ENCODE measurements at regions of chr22 and their contacts with region 1.

Region 1: GRCh38 chr22:22748297-22748743 is 103.9 kb downstream of the GGTLC2 start:
- DNase-seq: peak; percentile 64
- ATAC-seq: peak; percentile 82
- H3K4me3 ChIP-seq: no peak overlapping the region
- H3K27ac ChIP-seq: no peak overlapping the region
- H3K4me1 ChIP-seq: no peaks in the 10 kb centered on the region
- H3K27me3 ChIP-seq: peaks cover 11% of the 10 kb centered on the region
- CTCF ChIP-seq: peak; percentile 73

Region 2: DNA sequence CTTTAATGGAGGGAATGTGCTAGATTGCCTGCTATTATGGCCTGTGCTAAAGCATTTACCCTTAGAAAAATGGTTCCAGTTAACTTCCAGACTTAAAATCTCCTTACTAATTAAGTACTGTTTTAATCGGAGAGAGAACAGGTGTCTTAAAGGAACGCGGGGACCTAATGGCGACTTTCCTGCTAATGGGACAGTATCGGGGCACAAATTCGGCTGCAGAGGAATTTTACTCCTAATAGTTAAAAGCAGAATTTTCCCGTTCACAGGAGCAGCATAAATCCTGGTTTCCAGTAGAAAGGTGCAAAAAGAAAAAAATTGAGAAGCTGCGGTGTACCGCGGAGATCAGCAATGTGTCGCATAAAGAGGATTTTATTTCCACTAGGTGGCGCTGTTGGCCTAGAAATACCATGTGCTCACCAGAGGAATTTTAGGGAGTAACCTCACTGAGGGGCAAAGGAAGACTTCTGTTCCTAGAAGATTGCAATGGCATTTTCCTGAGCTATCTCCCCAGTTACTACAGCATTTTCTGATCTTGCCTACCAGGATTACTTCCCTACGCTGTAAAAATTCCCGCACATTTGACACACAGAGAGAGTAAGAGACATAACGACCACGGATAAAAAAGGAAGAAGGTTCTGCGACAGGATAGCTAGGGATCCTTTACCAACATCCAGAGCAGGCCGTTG is 284.3 kb before region 1 on chr22:
- CTCF ChIA-PET with region 1: no interaction called
- POLR2A ChIA-PET with region 1: no interaction called
- intact Hi-C with region 1: loop called (anchors 10 kb)
- DNase-seq: peak; percentile 79
- ATAC-seq: peak; percentile 70
- H3K4me3 ChIP-seq: no peak overlapping the region
- H3K27ac ChIP-seq: no peak overlapping the region
- H3K4me1 ChIP-seq: no peaks in the 10 kb centered on the region
- H3K27me3 ChIP-seq: no peaks in the 10 kb centered on the region
- CTCF ChIP-seq: peak; percentile 74

Region 3: GRCh38 chr22:22710719-22711531 is 37.4 kb before region 1 on chr22:
- CTCF ChIA-PET with region 1: no interaction called
- POLR2A ChIA-PET with region 1: no interaction called
- intact Hi-C with region 1: loop called (anchors 5 kb)
- DNase-seq: peak; percentile 71
- ATAC-seq: peak; percentile 58
- H3K4me3 ChIP-seq: no peak overlapping the region
- H3K27ac ChIP-seq: peak overlapping the region; percentile 93
- H3K4me1 ChIP-seq: peaks cover 30% of the 10 kb centered on the region
- H3K27me3 ChIP-seq: no peaks in the 10 kb centered on the region
- CTCF ChIP-seq: peak; percentile 93

Region 4: DNA sequence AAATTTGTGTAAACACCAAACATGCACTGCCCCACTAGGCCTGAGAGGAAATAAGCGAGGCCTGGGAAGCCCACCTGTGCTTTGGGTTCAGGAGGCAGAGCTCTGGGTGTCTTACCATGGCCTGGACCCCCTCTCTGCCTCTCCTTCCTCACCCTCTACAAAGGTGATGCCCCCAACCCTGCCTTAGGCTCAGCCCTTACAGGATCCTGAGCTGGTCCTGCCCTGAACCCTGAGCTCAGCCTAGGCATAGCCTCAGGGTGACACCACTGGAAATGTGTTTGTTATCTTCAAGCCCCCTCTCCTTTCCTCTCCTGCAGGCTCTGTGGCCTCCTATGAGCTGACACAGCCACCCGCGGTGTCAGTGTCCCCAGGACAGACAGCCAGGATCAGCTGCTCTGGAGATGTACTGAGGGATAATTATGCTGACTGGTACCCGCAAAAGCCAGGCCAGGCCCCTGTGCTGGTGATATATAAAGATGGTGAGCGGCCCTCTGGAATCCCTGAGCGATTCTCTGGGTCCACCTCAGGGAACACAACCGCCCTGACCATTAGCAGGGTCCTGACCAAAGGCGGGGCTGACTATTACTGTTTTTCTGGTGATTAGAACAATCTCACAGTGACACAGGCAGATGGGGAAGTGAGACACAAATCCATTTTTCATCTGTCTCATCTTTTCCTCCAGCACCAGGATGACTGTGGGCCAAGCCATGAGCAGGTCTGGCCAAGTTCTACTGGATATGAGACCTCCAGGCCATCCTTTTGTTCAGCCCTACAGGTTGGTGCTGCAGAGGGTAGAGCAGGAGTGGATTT is 13.8 kb after region 1 on chr22:
- CTCF ChIA-PET with region 1: no interaction called
- POLR2A ChIA-PET with region 1: no interaction called
- intact Hi-C with region 1: no loop called
- DNase-seq: no peak
- ATAC-seq: no peak
- H3K4me3 ChIP-seq: no peak overlapping the region
- H3K27ac ChIP-seq: no peak overlapping the region
- H3K4me1 ChIP-seq: no peaks in the 10 kb centered on the region
- H3K27me3 ChIP-seq: no peaks in the 10 kb centered on the region
- CTCF ChIP-seq: no peak